CD4-positive, alpha-beta T cell (primary cell): ENCODE measurements at regions of chr1 and their contacts with region 1.

Region 1: DNA sequence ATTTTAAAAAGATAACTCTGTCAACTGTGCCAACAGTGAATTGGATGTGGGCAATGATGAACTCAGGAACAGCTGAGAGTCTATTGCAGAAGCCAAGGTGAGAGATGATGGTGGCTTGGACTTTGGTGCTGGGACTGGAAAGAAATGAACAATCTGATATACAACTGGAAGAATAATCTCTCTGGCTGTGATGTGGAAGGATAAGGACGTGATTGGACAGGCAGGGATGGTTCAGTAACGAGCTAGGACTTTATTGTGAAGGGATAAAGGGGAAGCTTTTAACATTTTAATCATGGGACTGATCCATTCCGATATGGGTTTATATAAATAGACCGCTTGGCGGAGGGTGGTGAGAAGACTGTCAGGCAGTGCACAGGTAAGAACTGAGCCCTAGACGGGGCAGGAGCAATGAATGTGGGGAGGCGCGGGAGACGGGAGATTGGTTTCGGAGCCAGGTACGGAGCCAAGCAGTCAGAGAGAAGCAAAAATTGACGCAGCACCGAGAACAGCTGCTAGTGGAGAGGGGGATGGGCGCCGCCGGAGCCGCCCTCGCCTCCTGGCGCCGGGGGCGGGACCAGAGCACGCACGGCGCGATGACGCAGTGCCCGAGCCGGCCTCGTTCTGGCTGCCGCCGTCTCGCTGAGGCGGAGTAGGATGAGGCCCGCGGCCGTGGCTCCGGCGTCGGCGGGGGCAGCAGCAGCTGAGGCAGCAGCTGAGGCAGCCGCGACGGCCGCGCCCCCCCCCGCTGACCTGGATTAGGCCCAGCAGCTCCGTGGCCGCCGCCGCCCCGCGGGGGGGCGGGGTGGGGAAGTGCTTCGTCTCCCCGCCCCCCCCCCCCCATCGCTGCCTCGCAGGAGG is at the start of gene RNF11:
- DNase-seq: peak; percentile 82 to 97 (median 92)
- ATAC-seq: peak; percentile 90
- H3K4me3 ChIP-seq: peak within 1 kb of the TSS; percentile 78
- H3K4me3 Mint-ChIP-seq: peak within 1 kb of the TSS; percentile 94
- H3K27ac ChIP-seq: peak within 1 kb of the TSS; percentile 82 to 83
- H3K27ac Mint-ChIP-seq: peak within 1 kb of the TSS; percentile 93
- H3K4me1 ChIP-seq: peaks cover 33% of the 10 kb centered on the region
- H3K4me1 Mint-ChIP-seq: peaks cover 37% of the 10 kb centered on the region
- H3K27me3 ChIP-seq: no peaks in the 10 kb centered on the region
- H3K27me3 Mint-ChIP-seq: no peaks in the 10 kb centered on the region
- CTCF ChIP-seq: no peak
- total RNA-seq, gene RNF11: 91.3 to 97.4 TPM

Region 2: DNA sequence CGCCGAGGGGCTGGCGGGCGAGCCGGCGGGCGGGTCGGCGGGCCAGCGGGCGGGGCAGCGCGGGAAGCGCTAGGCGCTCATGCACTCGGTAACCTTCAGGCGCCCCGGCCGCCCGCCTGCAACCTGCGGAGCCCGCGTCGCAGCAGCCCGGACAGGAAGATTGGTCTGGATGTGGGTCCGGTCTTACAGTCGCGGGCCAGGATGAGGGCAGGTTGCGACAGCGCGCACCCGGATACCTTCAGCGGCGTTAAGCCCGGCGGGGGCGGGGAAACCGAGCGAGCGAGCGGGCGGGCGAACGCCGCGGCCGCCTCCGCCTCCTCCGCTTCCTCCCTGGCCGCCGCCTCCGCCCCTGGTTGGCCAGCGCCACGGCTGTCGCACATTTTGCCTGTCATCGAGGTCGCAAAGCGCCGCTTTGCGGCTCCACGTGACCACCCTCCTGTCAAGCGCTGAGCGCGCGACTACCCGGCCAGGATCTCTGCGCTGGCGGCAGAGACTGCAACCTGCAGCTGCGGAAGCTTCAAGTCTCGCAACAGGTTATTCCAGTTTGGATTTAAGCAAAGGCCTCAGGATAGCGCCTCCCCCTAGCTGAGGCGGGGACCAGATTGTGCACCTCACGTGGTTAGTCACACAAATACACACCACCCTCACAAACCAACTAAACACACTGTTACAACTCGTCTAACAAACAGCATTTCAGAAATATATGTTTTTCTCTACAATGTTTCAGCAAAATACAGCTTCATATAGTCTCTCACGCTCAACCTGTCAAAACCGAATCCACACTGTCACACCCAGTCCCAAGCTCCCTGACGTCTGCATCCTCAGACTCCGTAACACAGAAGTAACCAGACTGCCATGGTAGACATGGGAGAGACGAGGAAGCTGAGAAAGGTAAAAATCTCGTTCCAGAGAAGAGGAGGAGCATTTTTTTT is 275.7 kb before region 1 on chr1 and contains the start of gene FAF1:
- CTCF ChIA-PET with region 1: no interaction called
- POLR2A ChIA-PET with region 1: interaction called, 6 read pairs
- intact Hi-C with region 1: loop called (anchors 2 to 10 kb)
- DNase-seq: peak; percentile 95 to 99 (median 97)
- ATAC-seq: peak; percentile 87
- H3K4me3 ChIP-seq: peak within 1 kb of the TSS; percentile 94
- H3K4me3 Mint-ChIP-seq: peak within 1 kb of the TSS; percentile 98
- H3K27ac ChIP-seq: peak within 1 kb of the TSS; percentile 40 to 77
- H3K27ac Mint-ChIP-seq: peak within 1 kb of the TSS; percentile 50
- H3K4me1 ChIP-seq: peaks cover 13% of the 10 kb centered on the region
- H3K4me1 Mint-ChIP-seq: peaks cover 28% of the 10 kb centered on the region
- H3K27me3 ChIP-seq: no peaks in the 10 kb centered on the region
- H3K27me3 Mint-ChIP-seq: no peaks in the 10 kb centered on the region
- CTCF ChIP-seq: no peak
- total RNA-seq, gene FAF1: 43.5 to 44.0 TPM

Region 3: GRCh38 chr1:50968158-50968820 is 267.6 kb before region 1 on chr1:
- CTCF ChIA-PET with region 1: no interaction called
- POLR2A ChIA-PET with region 1: interaction called, 20 read pairs
- intact Hi-C with region 1: loop called in 1 of 2 experiments (anchors 10 kb)
- DNase-seq: peak; percentile 59 to 94 (median 76)
- ATAC-seq: peak; percentile 80
- H3K4me3 ChIP-seq: peak overlapping the region; percentile 90
- H3K4me3 Mint-ChIP-seq: peak overlapping the region; percentile 100
- H3K27ac ChIP-seq: peak overlapping the region; percentile 82 to 89
- H3K27ac Mint-ChIP-seq: peak overlapping the region; percentile 89
- H3K4me1 ChIP-seq: peaks cover 19% of the 10 kb centered on the region
- H3K4me1 Mint-ChIP-seq: peaks cover 26% of the 10 kb centered on the region
- H3K27me3 ChIP-seq: no peaks in the 10 kb centered on the region
- H3K27me3 Mint-ChIP-seq: no peaks in the 10 kb centered on the region
- CTCF ChIP-seq: peak; percentile 39

Region 4: GRCh38 chr1:51192213-51192843 is 43.6 kb before region 1 on chr1:
- CTCF ChIA-PET with region 1: interaction called, 4 read pairs
- POLR2A ChIA-PET with region 1: interaction called, 5 read pairs
- intact Hi-C with region 1: loop called in 1 of 2 experiments (anchors 5 kb)
- DNase-seq: peak; percentile 22 to 73 (median 42)
- ATAC-seq: peak; percentile 58
- H3K4me3 ChIP-seq: no peak overlapping the region
- H3K4me3 Mint-ChIP-seq: no peak overlapping the region
- H3K27ac ChIP-seq: no peak overlapping the region
- H3K27ac Mint-ChIP-seq: no peak overlapping the region
- H3K4me1 ChIP-seq: no peaks in the 10 kb centered on the region
- H3K4me1 Mint-ChIP-seq: no peaks in the 10 kb centered on the region
- H3K27me3 ChIP-seq: peaks cover 0 to 4% of the 10 kb centered on the region in 2 experiments
- H3K27me3 Mint-ChIP-seq: no peaks in the 10 kb centered on the region
- CTCF ChIP-seq: peak; percentile 87

Region 5: DNA sequence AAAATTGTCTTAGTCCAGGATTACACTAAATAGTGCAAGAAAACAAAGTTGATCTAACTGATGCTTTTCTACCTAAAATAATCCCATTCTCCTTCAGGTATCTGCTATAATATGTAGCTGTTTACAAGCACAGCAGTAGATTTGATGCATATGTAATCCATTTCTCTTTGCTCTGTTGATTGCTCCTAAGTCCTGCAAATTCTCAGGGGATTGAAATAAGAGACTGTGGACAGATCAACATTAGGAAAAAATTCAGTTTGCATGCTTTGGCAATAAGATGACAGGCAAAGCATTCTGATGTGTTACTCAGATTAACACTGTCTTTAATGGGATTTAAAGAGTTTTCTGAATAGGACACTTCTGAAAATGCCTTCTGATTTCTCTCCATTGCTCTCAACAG is 34.8 kb after region 1 on chr1:
- CTCF ChIA-PET with region 1: no interaction called
- POLR2A ChIA-PET with region 1: interaction called, 3 read pairs
- intact Hi-C with region 1: loop called in 1 of 2 experiments (anchors 5 kb)
- DNase-seq: no peak
- ATAC-seq: no peak
- H3K4me3 ChIP-seq: no peak overlapping the region
- H3K4me3 Mint-ChIP-seq: no peak overlapping the region
- H3K27ac ChIP-seq: no peak overlapping the region
- H3K27ac Mint-ChIP-seq: no peak overlapping the region
- H3K4me1 ChIP-seq: peaks cover 18% of the 10 kb centered on the region
- H3K4me1 Mint-ChIP-seq: peaks cover 28% of the 10 kb centered on the region
- H3K27me3 ChIP-seq: no peaks in the 10 kb centered on the region
- H3K27me3 Mint-ChIP-seq: no peaks in the 10 kb centered on the region
- CTCF ChIP-seq: no peak

Region 6: GRCh38 chr1:51519048-51519864 is 283.4 kb after region 1 on chr1 and contains the start of gene EPS15:
- CTCF ChIA-PET with region 1: no interaction called
- POLR2A ChIA-PET with region 1: interaction called, 5 read pairs
- intact Hi-C with region 1: loop called in 1 of 2 experiments (anchors 5 kb)
- DNase-seq: peak; percentile 73 to 92 (median 82)
- ATAC-seq: peak; percentile 69
- H3K4me3 ChIP-seq: peak within 1 kb of the TSS; percentile 76
- H3K4me3 Mint-ChIP-seq: peak within 1 kb of the TSS; percentile 94
- H3K27ac ChIP-seq: peak within 1 kb of the TSS; percentile 48 to 50
- H3K27ac Mint-ChIP-seq: peak within 1 kb of the TSS; percentile 88
- H3K4me1 ChIP-seq: peaks cover 24% of the 10 kb centered on the region
- H3K4me1 Mint-ChIP-seq: peaks cover 59% of the 10 kb centered on the region
- H3K27me3 ChIP-seq: no peaks in the 10 kb centered on the region
- H3K27me3 Mint-ChIP-seq: no peaks in the 10 kb centered on the region
- CTCF ChIP-seq: no peak
- total RNA-seq, gene EPS15: 44.5 to 47.9 TPM

Region 7: GRCh38 chr1:51616901-51617708 is 381.2 kb after region 1 on chr1 and contains the start of gene OSBPL9:
- CTCF ChIA-PET with region 1: no interaction called
- POLR2A ChIA-PET with region 1: interaction called, 3 read pairs
- intact Hi-C with region 1: loop called in 1 of 2 experiments (anchors 5 kb)
- DNase-seq: peak; percentile 80 to 98 (median 85)
- ATAC-seq: peak; percentile 90
- H3K4me3 ChIP-seq: peak within 1 kb of the TSS; percentile 97
- H3K4me3 Mint-ChIP-seq: peak within 1 kb of the TSS; percentile 99
- H3K27ac ChIP-seq: peak within 1 kb of the TSS; percentile 61 to 73
- H3K27ac Mint-ChIP-seq: peak within 1 kb of the TSS; percentile 95
- H3K4me1 ChIP-seq: peaks cover 17% of the 10 kb centered on the region
- H3K4me1 Mint-ChIP-seq: peaks cover 47% of the 10 kb centered on the region
- H3K27me3 ChIP-seq: no peaks in the 10 kb centered on the region
- H3K27me3 Mint-ChIP-seq: no peaks in the 10 kb centered on the region
- CTCF ChIP-seq: no peak
- total RNA-seq, gene OSBPL9: 35.6 to 36.5 TPM